ENCODE measurements at regions of chr6 and their contacts with region 1.

Region 1: GRCh38 chr6:90216072-90216977 is 80.3 kb downstream of the BACH2 start:
- DNase-seq: no peak
- ATAC-seq: no peak
- H3K4me3 ChIP-seq: no peak overlapping the region
- H3K27ac ChIP-seq: no peak overlapping the region
- H3K4me1 ChIP-seq: peaks cover 33 to 60% of the 10 kb centered on the region in 2 experiments
- H3K27me3 ChIP-seq: no peaks in the 10 kb centered on the region
- CTCF ChIP-seq: no peak
- POLR2A ChIP-seq: no peak
- RAD21 ChIP-seq: no peak

Region 2: GRCh38 chr6:90080876-90081481 is 135.3 kb before region 1 on chr6:
- CTCF ChIA-PET with region 1: no interaction called
- POLR2A ChIA-PET with region 1: no interaction called
- RAD21 ChIA-PET with region 1: interaction called in 1 of 2 experiments, 11 read pairs
- intact Hi-C with region 1: no loop called
- DNase-seq: no peak
- ATAC-seq: no peak
- H3K4me3 ChIP-seq: no peak overlapping the region
- H3K27ac ChIP-seq: no peak overlapping the region
- H3K4me1 ChIP-seq: no peaks in the 10 kb centered on the region
- H3K27me3 ChIP-seq: no peaks in the 10 kb centered on the region
- CTCF ChIP-seq: no peak
- POLR2A ChIP-seq: no peak
- RAD21 ChIP-seq: no peak

Region 3: GRCh38 chr6:90160013-90160412 is 56.3 kb before region 1 on chr6:
- CTCF ChIA-PET with region 1: no interaction called
- POLR2A ChIA-PET with region 1: no interaction called
- RAD21 ChIA-PET with region 1: no interaction called
- intact Hi-C with region 1: no loop called
- DNase-seq: no peak
- ATAC-seq: no peak
- H3K4me3 ChIP-seq: no peak overlapping the region
- H3K27ac ChIP-seq: no peak overlapping the region
- H3K4me1 ChIP-seq: peaks cover 0 to 15% of the 10 kb centered on the region in 2 experiments; a peak in 2 of 4 replicates
- H3K27me3 ChIP-seq: no peaks in the 10 kb centered on the region
- CTCF ChIP-seq: no peak
- POLR2A ChIP-seq: no peak
- RAD21 ChIP-seq: no peak

Region 4: GRCh38 chr6:90285611-90286381 is 69.5 kb after region 1 on chr6:
- CTCF ChIA-PET with region 1: interaction called, 4 read pairs
- POLR2A ChIA-PET with region 1: no interaction called
- RAD21 ChIA-PET with region 1: no interaction called
- intact Hi-C with region 1: loop called (anchors 2 kb)
- DNase-seq: peak; percentile 76
- ATAC-seq: peak; percentile 77
- H3K4me3 ChIP-seq: peak overlapping the region; percentile 46 to 61
- H3K27ac ChIP-seq: peak overlapping the region; percentile 65
- H3K4me1 ChIP-seq: peaks cover 23 to 40% of the 10 kb centered on the region in 2 experiments
- H3K27me3 ChIP-seq: no peaks in the 10 kb centered on the region
- CTCF ChIP-seq: no peak
- POLR2A ChIP-seq: no peak
- RAD21 ChIP-seq: peak; percentile 20; the same call in 1 of the 2 replicates

Region 5: GRCh38 chr6:90369024-90369519 is 152.7 kb after region 1 on chr6:
- CTCF ChIA-PET with region 1: no interaction called
- POLR2A ChIA-PET with region 1: no interaction called
- RAD21 ChIA-PET with region 1: no interaction called
- intact Hi-C with region 1: loop called (anchors 2 kb)
- DNase-seq: peak; percentile 99
- ATAC-seq: peak; percentile 98
- H3K4me3 ChIP-seq: peak overlapping the region in 1 of 2 experiments; percentile 38; a peak in 2 of 4 replicates
- H3K27ac ChIP-seq: no peak overlapping the region
- H3K4me1 ChIP-seq: peaks cover 14 to 27% of the 10 kb centered on the region in 2 experiments
- H3K27me3 ChIP-seq: no peaks in the 10 kb centered on the region
- CTCF ChIP-seq: no peak
- POLR2A ChIP-seq: no peak
- RAD21 ChIP-seq: peak; percentile 44

Region 6: GRCh38 chr6:90393232-90393884 is 177.0 kb after region 1 on chr6:
- CTCF ChIA-PET with region 1: no interaction called
- POLR2A ChIA-PET with region 1: no interaction called
- RAD21 ChIA-PET with region 1: no interaction called
- intact Hi-C with region 1: loop called (anchors 10 kb)
- DNase-seq: peak; percentile 41
- ATAC-seq: peak; percentile 95
- H3K4me3 ChIP-seq: no peak overlapping the region
- H3K27ac ChIP-seq: no peak overlapping the region
- H3K4me1 ChIP-seq: peaks cover 0 to 11% of the 10 kb centered on the region in 2 experiments; a peak in 1 of 4 replicates
- H3K27me3 ChIP-seq: no peaks in the 10 kb centered on the region
- CTCF ChIP-seq: peak; percentile 62 to 83 (median 76); a peak in 5 of 6 replicates
- POLR2A ChIP-seq: no peak
- RAD21 ChIP-seq: peak; percentile 86

Measured in HCT116 (cell line).